IMR-90 (cell line): ENCODE measurements at regions of chr18 and their contacts with region 1.

Region 1: GRCh38 chr18:76428396-76429261 is 66.4 kb downstream of the ZNF516 start:
- DNase-seq: peak; percentile 52
- ATAC-seq: no peak
- H3K4me3 ChIP-seq: no peak overlapping the region
- H3K27ac ChIP-seq: no peak overlapping the region
- H3K4me1 ChIP-seq: peaks cover 10% of the 10 kb centered on the region
- H3K27me3 ChIP-seq: no peaks in the 10 kb centered on the region
- CTCF ChIP-seq: no peak
- POLR2A ChIP-seq: no peak
- RAD21 ChIP-seq: no peak

Region 2: GRCh38 chr18:75773618-75774017 is 655.0 kb before region 1 on chr18:
- CTCF ChIA-PET with region 1: no interaction called
- POLR2A ChIA-PET with region 1: no interaction called
- dilution Hi-C with region 1: no loop called
- in situ Hi-C with region 1: no loop called
- intact Hi-C with region 1: no loop called
- DNase-seq: no peak
- ATAC-seq: no peak
- H3K4me3 ChIP-seq: no peak overlapping the region
- H3K27ac ChIP-seq: no peak overlapping the region
- H3K4me1 ChIP-seq: no peaks in the 10 kb centered on the region
- H3K27me3 ChIP-seq: no peaks in the 10 kb centered on the region; the same call in 1 of the 2 replicates
- CTCF ChIP-seq: no peak
- POLR2A ChIP-seq: no peak
- RAD21 ChIP-seq: no peak

Region 3: DNA sequence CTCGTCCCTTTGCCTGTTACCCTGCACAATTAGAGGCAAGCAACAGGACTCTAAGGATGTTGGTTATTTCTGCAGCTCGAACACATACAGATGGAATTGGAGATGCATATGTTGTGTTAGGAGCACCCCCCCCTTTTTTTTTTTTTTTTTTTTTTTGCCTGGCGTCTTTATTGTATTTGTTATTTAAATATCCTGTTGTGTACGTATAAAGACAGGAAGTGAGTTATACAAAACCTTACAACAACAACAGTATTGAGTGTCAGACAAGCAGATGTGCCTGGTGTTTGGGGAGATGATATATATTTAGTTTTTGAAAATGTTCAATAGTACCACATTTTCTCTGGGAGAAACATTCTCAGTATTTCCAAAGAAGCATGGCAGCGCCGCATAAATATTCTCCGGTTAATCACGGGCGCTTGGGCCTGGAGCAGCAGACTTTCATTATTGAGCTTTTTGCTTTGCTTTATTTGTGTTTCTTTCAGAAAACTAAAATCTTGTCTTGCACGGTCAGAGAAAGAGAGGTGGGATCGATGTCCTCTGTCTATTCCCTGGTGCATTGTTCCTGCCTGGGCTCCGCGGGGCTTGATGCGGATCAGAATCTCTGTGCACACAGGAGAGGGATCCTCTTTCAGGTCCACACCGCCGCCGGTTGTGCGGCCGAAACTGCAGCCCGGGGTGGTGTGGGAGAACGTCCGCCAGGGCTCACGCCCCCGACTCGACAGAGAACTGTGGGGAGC is 89.7 kb after region 1 on chr18:
- CTCF ChIA-PET with region 1: no interaction called
- POLR2A ChIA-PET with region 1: interaction called, 13 read pairs
- dilution Hi-C with region 1: no loop called
- in situ Hi-C with region 1: no loop called
- intact Hi-C with region 1: no loop called
- DNase-seq: peak; percentile 32
- ATAC-seq: peak; percentile 90
- H3K4me3 ChIP-seq: peak overlapping the region; percentile 41
- H3K27ac ChIP-seq: peak overlapping the region; percentile 56; the same call in 1 of the 2 replicates
- H3K4me1 ChIP-seq: peaks cover 2% of the 10 kb centered on the region; the same call in 1 of the 2 replicates
- H3K27me3 ChIP-seq: no peaks in the 10 kb centered on the region
- CTCF ChIP-seq: no peak
- POLR2A ChIP-seq: no peak
- RAD21 ChIP-seq: no peak

Region 4: DNA sequence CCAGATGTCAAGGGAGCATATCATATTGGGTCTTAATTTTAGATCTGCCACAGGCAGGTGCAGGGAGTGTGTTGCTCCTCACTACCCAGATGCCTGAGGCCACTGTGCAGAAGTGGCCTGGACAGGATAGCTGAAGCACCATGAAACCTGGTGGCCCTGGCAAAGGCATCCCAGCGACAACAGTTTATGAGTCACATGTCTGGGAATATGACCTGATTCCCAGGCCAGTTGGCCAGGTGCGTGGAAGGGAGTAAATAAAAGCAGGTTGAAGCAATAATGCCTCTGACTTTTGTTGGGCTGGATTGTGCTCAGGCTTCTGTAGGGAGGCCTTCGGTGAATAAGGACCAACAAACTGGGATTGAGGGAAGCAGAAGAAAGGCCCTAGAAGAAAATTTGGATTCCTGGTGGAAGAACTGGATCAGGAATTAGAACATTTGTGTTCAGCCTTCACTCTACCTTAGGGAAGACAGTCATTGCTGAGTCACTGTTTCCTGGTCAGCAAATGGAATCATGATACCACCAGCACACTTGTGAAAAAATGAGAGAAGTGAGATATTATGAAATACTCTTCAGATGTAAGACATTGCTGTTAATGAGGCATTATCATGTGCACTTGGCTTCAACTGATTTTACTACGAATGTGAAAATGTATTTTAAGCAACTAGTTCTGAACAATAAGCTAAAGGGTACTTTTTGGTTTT is 144.8 kb after region 1 on chr18:
- CTCF ChIA-PET with region 1: no interaction called
- POLR2A ChIA-PET with region 1: no interaction called
- dilution Hi-C with region 1: no loop called
- in situ Hi-C with region 1: no loop called
- intact Hi-C with region 1: no loop called
- DNase-seq: peak; percentile 80
- ATAC-seq: peak; percentile 61; the same call in 1 of the 2 replicates
- H3K4me3 ChIP-seq: no peak overlapping the region
- H3K27ac ChIP-seq: peak overlapping the region; percentile 20; the same call in 1 of the 2 replicates
- H3K4me1 ChIP-seq: peaks cover 10% of the 10 kb centered on the region
- H3K27me3 ChIP-seq: no peaks in the 10 kb centered on the region
- CTCF ChIP-seq: no peak
- POLR2A ChIP-seq: no peak
- RAD21 ChIP-seq: no peak

Region 5: DNA sequence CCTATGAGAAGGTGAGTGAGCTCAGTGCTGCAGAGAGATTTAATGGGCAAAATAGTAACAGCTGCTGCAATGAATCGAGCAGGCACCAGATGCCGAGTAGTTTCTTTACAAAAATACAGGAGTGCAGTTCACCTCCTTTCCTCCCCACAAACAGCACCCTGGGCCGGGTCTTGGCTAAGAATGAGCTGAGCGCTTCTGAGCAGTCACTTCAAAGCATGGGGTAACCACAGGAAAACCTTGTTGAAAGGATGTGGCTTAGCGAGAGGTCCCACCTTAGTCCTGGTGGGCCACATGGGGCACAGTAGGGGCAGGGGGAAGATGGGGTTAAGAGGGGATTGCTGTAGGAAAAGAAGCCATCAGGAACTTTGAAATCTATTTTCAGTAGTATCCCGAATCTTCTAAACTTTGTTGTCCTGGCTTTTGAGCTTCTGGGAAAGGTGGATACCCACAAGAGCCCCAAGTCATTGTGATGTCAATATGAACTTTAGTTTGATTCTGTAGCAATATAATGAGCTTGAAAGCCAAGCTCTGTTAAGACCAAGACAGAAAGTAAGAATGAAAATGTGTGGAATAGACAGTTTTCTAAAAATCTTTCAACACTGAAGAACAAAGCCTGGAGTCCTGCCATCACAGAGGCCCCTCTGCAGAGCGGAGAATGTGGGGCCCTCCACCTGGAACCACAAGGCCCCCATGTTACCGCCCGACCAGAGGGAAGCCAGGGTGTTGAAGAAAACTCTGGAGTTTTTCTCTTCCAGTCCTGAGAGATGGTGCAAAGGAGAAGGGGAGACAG is 292.8 kb after region 1 on chr18:
- CTCF ChIA-PET with region 1: no interaction called
- POLR2A ChIA-PET with region 1: no interaction called
- dilution Hi-C with region 1: no loop called
- in situ Hi-C with region 1: no loop called
- intact Hi-C with region 1: no loop called
- DNase-seq: no peak
- ATAC-seq: no peak
- H3K4me3 ChIP-seq: no peak overlapping the region
- H3K27ac ChIP-seq: no peak overlapping the region
- H3K4me1 ChIP-seq: no peaks in the 10 kb centered on the region
- H3K27me3 ChIP-seq: peaks cover 7% of the 10 kb centered on the region
- CTCF ChIP-seq: no peak
- POLR2A ChIP-seq: no peak
- RAD21 ChIP-seq: no peak